Dendritic cell treated with granulocyte-macrophage colony-stimulating factor and Interleukin-4, amounts not matched to agents 40 ng/mL and 50 ng/mL, for 4 days (primary cell): ENCODE measurements at regions of chr3 and their contacts with region 1.

Region 1: GRCh38 chr3:47009225-47010110 is 30.0 kb downstream of the NBEAL2 start:
- H3K4me3 Mint-ChIP-seq: peak overlapping the region; percentile 73
- H3K27ac Mint-ChIP-seq: peak overlapping the region; percentile 85
- H3K4me1 Mint-ChIP-seq: peaks cover 8% of the 10 kb centered on the region
- H3K27me3 Mint-ChIP-seq: no peaks in the 10 kb centered on the region

Region 2: DNA sequence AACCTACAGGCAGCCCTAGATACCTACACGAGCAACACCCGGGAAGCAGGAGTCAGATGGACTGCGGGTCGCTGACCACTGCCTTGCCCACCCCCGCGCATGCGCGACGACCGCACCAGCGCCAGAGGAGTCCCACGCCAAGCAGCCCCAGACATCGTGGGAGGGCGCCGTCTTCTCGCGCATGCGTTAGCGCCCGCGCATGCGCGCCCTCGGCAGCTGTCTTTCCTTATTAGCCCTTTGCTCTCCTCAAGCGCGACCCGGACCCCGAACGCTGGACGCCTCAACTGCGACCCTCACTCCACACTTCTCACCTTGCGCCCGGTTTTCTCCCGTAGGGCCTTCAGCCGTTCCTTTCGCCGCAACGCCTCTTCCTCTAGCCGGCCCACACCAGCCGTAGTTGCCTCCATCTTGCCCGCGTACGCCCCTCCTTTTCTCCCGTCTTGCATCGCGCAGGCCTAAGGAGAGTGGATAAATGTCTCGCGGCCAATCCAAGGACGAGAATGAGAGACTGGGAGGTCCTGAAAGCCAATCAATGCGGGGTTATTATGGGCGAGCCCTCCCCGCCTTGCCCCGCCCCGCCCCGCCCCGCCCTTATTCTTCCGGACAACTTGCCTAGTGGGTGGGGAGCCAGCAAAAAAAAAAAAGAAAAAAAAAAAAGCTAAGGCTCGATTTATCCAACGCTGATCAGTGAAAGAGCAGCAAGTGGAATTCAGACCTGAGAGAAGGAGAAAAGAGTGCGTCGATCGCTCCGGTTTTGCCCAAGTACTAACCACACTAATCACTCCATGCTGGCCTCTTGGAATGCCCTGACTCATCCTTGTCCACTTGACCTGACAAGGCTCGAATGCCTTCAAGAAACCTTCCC is 32.9 kb before region 1 on chr3 and contains the start of gene CCDC12:
- intact Hi-C with region 1: loop called (anchors 1 kb)
- H3K4me3 Mint-ChIP-seq: peak within 1 kb of the TSS; percentile 86
- H3K27ac Mint-ChIP-seq: peak within 1 kb of the TSS; percentile 94
- H3K4me1 Mint-ChIP-seq: peaks cover 69% of the 10 kb centered on the region
- H3K27me3 Mint-ChIP-seq: no peaks in the 10 kb centered on the region